ENCODE measurements at regions of chr2 and their contacts with region 1.

Region 1: GRCh38 chr2:95165129-95166064 is at the start of gene ZNF2:
- DNase-seq: peak; percentile 97 to 98
- H3K4me3 ChIP-seq: peak within 1 kb of the TSS; percentile 65
- H3K27ac ChIP-seq: peak within 1 kb of the TSS; percentile 55
- H3K4me1 ChIP-seq: peaks cover 17% of the 10 kb centered on the region
- H3K27me3 ChIP-seq: no peaks in the 10 kb centered on the region
- CTCF ChIP-seq: no peak
- total RNA-seq, gene ZNF2: 2.9 and 4.9 TPM in 2 replicates

Region 2: GRCh38 chr2:95121407-95122196 is 43.8 kb before region 1 on chr2 and contains the start of gene MRPS5:
- CTCF ChIA-PET with region 1: no interaction called
- POLR2A ChIA-PET with region 1: interaction called, 3 read pairs
- intact Hi-C with region 1: loop called (anchors 2 kb)
- DNase-seq: peak; percentile 48 to 87
- H3K4me3 ChIP-seq: peak within 1 kb of the TSS; percentile 94
- H3K27ac ChIP-seq: peak within 1 kb of the TSS; percentile 66
- H3K4me1 ChIP-seq: peaks cover 18% of the 10 kb centered on the region
- H3K27me3 ChIP-seq: no peaks in the 10 kb centered on the region
- CTCF ChIP-seq: 0 out of 2 replicates have a peak, but pooled peaks have one; percentile 14
- total RNA-seq, gene MRPS5: 69.0 and 69.4 TPM in 2 replicates